ENCODE measurements at regions of chr10 and their contacts with region 1.

Region 1: GRCh38 chr10:48608279-48608681 is 3.4 kb upstream of the ARHGAP22 start:
- DNase-seq: peak; percentile 48
- ATAC-seq: peak; percentile 83
- H3K4me3 ChIP-seq: no peak overlapping the region
- H3K27ac ChIP-seq: no peak overlapping the region
- H3K4me1 ChIP-seq: peaks cover 14% of the 10 kb centered on the region
- H3K27me3 ChIP-seq: no peaks in the 10 kb centered on the region; a peak in 1 of 4 replicates
- CTCF ChIP-seq: peak; percentile 88 to 94 (median 89)
- EP300 ChIP-seq: no peak
- POLR2A ChIP-seq: no peak
- RAD21 ChIP-seq: peak; percentile 69

Region 2: DNA sequence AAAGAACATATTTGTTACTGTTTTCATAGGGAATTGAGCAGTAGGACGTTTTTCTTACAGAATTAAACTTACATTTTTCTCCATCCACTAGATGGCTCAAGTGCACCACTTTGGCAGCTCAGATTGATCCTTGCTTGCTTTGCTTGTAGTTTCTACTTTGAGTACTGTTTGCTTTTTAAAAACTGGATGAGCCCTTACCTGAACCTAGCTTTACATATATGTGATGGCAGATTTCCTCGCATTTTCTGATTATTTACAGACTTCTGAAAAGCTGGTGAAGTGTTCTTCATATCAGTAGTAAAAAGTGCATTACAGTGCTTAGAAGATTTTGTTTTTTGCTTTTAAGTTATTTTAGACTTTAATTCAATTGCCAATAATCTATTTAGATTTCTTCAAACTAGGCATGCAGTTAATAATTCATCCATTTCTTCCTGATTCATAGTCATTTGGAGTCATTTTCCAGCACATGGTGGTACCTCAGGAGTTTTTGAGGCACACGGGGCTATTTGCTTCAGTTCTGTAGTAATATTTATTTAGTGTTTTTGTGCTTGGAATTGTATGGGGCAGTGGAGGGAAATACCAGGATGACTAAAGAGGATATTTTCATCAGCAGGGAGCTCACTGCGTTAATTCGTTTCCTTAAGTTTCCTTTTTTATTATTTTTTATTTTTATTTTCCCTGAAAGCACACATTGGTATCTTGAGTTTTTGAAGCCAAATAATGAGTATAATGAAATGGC is 244.5 kb before region 1 on chr10:
- CTCF ChIA-PET with region 1: interaction called, 29 read pairs
- POLR2A ChIA-PET with region 1: no interaction called
- RAD21 ChIA-PET with region 1: interaction called, 6 read pairs
- SMC1A ChIA-PET with region 1: interaction called, 4 read pairs
- in situ Hi-C with region 1: no loop called
- intact Hi-C with region 1: loop called (anchors 5 kb)
- DNase-seq: peak; percentile 51
- ATAC-seq: peak; percentile 91
- H3K4me3 ChIP-seq: no peak overlapping the region
- H3K27ac ChIP-seq: no peak overlapping the region
- H3K4me1 ChIP-seq: no peaks in the 10 kb centered on the region
- H3K27me3 ChIP-seq: no peaks in the 10 kb centered on the region
- CTCF ChIP-seq: peak; percentile 55 to 83 (median 74)
- EP300 ChIP-seq: no peak
- POLR2A ChIP-seq: no peak
- RAD21 ChIP-seq: peak; percentile 93

Region 3: DNA sequence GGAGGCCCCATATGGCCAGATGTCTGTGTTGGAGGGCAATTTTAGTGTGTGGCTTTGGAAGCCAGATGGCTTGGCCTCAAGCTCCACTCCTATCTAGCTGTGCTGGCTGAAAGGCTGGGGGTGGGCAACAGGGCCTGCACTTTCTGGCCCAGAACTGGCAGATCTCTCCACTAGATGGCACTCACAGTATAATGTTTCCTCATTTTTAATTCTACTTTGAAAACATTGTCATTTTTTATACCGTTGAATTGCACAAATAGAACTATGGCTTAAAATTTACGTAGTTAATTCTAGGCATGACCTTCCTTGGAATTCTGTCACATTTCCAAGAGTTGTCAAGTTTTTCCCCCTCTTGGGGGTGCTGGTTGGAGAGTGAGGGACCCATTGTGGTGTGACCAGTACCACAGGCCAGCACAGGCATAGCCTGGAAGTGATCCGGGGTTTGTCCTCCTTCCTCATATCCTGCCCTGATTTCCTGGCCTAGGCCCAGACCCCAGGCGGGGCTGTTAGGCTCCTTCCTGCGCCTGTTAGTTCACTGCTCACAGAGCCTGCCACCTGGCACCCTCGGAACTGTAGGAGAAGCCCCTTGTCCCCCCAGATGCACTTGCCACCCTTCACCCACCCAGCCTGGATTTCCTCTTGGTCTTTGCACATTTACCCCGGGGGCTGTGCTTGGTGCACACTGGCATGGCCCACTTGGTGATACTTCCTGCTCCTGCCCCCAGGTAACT is 56.3 kb before region 1 on chr10:
- CTCF ChIA-PET with region 1: interaction called, 71 read pairs
- POLR2A ChIA-PET with region 1: no interaction called
- RAD21 ChIA-PET with region 1: interaction called, 16 read pairs
- SMC1A ChIA-PET with region 1: interaction called, 85 read pairs
- in situ Hi-C with region 1: no loop called
- intact Hi-C with region 1: loop called (anchors 1 kb)
- DNase-seq: no peak
- ATAC-seq: peak; percentile 93
- H3K4me3 ChIP-seq: no peak overlapping the region
- H3K27ac ChIP-seq: no peak overlapping the region
- H3K4me1 ChIP-seq: no peaks in the 10 kb centered on the region
- H3K27me3 ChIP-seq: no peaks in the 10 kb centered on the region; a peak in 1 of 4 replicates
- CTCF ChIP-seq: peak; percentile 60 to 84 (median 78)
- EP300 ChIP-seq: no peak
- POLR2A ChIP-seq: no peak
- RAD21 ChIP-seq: peak; percentile 80

Region 4: DNA sequence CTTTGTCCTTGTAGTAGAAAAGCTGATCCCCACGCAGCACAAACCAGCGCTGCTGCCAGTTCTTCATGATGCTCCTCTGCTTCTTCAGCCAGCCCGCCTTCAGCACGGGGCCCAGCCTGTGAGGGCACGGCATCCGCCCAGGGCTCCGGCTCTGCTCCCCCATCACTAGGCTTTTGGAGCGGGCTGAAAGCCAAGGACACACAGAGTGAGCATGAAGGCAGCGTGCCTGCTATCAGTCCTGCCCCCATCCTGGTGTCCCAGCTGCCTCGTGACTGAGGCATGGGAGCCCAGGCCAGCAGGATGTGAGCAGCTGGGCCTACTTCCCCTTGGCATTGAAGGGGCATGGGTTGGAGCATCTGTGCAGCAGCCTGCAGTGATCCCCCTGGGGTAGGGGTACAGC is 25.3 kb before region 1 on chr10:
- CTCF ChIA-PET with region 1: interaction called, 14 read pairs
- POLR2A ChIA-PET with region 1: no interaction called
- RAD21 ChIA-PET with region 1: no interaction called
- SMC1A ChIA-PET with region 1: interaction called, 8 read pairs
- in situ Hi-C with region 1: no loop called
- intact Hi-C with region 1: no loop called
- DNase-seq: no peak
- ATAC-seq: no peak
- H3K4me3 ChIP-seq: no peak overlapping the region
- H3K27ac ChIP-seq: no peak overlapping the region
- H3K4me1 ChIP-seq: peaks cover 3% of the 10 kb centered on the region; the same call in 1 of the 2 replicates
- H3K27me3 ChIP-seq: no peaks in the 10 kb centered on the region
- CTCF ChIP-seq: no peak
- EP300 ChIP-seq: no peak
- POLR2A ChIP-seq: no peak
- RAD21 ChIP-seq: no peak

Region 5: GRCh38 chr10:48634198-48634983 is 26.1 kb after region 1 on chr10:
- CTCF ChIA-PET with region 1: interaction called, 175 read pairs
- POLR2A ChIA-PET with region 1: interaction called, 10 read pairs
- RAD21 ChIA-PET with region 1: interaction called, 28 read pairs
- SMC1A ChIA-PET with region 1: interaction called, 174 read pairs
- in situ Hi-C with region 1: no loop called
- intact Hi-C with region 1: loop called (anchors 1 kb)
- DNase-seq: peak; percentile 91
- ATAC-seq: peak; percentile 97
- H3K4me3 ChIP-seq: no peak overlapping the region
- H3K27ac ChIP-seq: peak overlapping the region; percentile 45
- H3K4me1 ChIP-seq: peaks cover 38% of the 10 kb centered on the region
- H3K27me3 ChIP-seq: no peaks in the 10 kb centered on the region
- CTCF ChIP-seq: no peak
- EP300 ChIP-seq: peak; percentile 35 to 41; a peak in 1 of 4 replicates
- POLR2A ChIP-seq: no peak
- RAD21 ChIP-seq: no peak

Measured in GM12878 (cell line).